A549 (cell line): ENCODE measurements at regions of chr2 and their contacts with region 1.

Region 1: DNA sequence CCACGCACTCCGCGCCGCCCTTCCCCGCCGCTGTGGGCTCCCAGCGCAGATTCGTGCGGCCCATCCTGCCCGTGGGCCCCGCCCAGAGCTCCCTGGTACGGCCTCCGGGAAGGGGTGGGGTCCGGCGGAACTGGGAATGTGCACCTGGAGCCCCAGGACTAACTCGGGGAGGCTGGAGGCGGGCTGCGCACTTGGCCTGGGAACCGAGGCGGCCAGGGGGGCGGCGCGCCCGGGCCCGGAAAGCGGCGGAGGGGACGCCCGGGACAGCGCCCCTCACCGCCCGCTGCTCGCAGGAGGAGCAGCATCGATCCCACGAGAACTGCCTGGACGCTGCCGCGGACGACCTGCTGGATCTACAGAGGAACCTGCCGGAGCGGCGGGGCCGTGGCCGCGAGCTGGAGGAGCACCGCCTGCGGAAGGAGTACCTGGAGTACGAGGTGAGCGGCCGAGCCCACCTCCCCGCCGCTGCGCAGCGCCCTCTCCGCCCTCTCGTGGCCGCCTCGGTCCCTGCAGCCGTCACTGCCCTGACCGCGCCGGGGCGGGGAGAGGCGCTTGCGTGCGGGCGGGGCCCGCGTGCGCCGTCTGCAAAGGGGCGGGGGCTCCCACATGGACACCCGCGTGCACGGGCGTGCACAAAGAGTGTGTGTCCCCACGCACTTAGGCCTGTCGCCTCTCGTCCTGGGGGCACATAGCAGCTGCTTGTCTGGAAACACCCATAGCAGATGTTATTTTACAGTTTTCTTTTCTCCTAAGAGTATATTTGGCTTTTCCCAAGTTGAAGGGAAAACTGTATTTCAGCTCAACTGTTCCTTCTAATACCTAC is 25.2 kb downstream of the PSD4 start:
- DNase-seq: peak; percentile 61 to 90
- ATAC-seq: peak; percentile 81 to 90
- H3K4me3 ChIP-seq: peak overlapping the region; percentile 73
- H3K27ac ChIP-seq: peak overlapping the region; percentile 92 to 97
- H3K4me1 ChIP-seq: peaks cover 48% of the 10 kb centered on the region
- CTCF ChIP-seq: peak; percentile 96
- EP300 ChIP-seq: no peak
- POLR2A ChIP-seq: peak; percentile 62
- RAD21 ChIP-seq: peak; percentile 56 to 80; a peak in 4 of 5 replicates

Region 2: GRCh38 chr2:113157118-113157896 is 41.7 kb before region 1 on chr2:
- CTCF ChIA-PET with region 1: interaction called, 32 read pairs
- POLR2A ChIA-PET with region 1: interaction called, 7 read pairs
- DNase-seq: no peak
- ATAC-seq: peak; percentile 69 to 81
- H3K4me3 ChIP-seq: peak overlapping the region; percentile 66
- H3K27ac ChIP-seq: peak overlapping the region; percentile 85 to 96
- H3K4me1 ChIP-seq: peaks cover 23% of the 10 kb centered on the region
- CTCF ChIP-seq: no peak
- EP300 ChIP-seq: no peak
- POLR2A ChIP-seq: no peak; the same call in 1 of the 2 replicates
- RAD21 ChIP-seq: no peak

Region 3: GRCh38 chr2:113181258-113182051 is 17.5 kb before region 1 on chr2:
- CTCF ChIA-PET with region 1: interaction called, 25 read pairs
- POLR2A ChIA-PET with region 1: no interaction called
- DNase-seq: no peak
- ATAC-seq: peak in 1 of 2 experiments; percentile 14; a peak in 2 of 6 replicates
- H3K4me3 ChIP-seq: no peak overlapping the region
- H3K27ac ChIP-seq: no peak overlapping the region
- H3K4me1 ChIP-seq: no peaks in the 10 kb centered on the region
- CTCF ChIP-seq: no peak
- EP300 ChIP-seq: no peak
- POLR2A ChIP-seq: no peak
- RAD21 ChIP-seq: no peak

Region 4: GRCh38 chr2:113225263-113226259 is 26.6 kb after region 1 on chr2:
- CTCF ChIA-PET with region 1: interaction called, 28 read pairs
- POLR2A ChIA-PET with region 1: interaction called, 3 read pairs
- DNase-seq: peak; percentile 41 to 84
- ATAC-seq: peak; percentile 82 to 86
- H3K4me3 ChIP-seq: no peak overlapping the region
- H3K27ac ChIP-seq: peak overlapping the region; percentile 77 to 91
- H3K4me1 ChIP-seq: peaks cover 69% of the 10 kb centered on the region
- CTCF ChIP-seq: no peak
- EP300 ChIP-seq: no peak
- POLR2A ChIP-seq: no peak
- RAD21 ChIP-seq: no peak

Region 5: DNA sequence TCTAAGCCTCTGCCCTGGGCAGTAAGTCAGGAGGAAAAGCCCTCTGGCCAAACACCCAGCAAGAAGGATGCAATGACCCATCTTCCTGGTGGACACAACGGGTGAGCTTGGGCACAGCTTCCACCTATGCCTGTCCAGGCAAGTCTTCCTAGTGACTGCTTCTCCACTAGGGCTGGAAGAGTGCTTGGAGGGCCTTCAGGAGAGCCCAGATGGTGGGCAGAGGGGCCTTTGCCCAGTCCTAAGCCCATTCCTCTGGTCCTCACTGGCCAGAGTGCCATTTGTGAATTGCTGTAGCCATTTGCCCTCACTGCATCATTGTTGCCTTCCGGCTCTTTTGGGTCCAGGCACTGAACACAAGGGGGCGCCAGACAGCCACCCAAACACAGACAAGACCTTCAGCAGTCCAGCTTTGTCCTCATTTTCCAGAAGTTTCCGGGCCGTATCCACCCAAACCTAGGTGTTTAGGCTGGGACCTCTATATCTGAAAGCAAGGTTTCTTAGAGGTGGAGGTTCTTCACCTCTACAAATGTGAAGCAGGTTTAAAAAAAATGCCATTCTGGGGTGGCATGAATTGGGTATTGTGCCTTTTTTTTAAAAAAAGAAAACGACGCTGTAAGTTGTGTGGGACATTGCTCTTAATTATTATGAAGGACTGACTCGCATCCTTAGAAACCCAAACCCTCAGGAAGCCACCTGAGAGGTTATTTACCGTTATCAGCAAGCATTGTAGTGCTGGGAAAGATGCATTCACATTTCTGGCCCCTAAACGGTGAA is 50.2 kb after region 1 on chr2:
- CTCF ChIA-PET with region 1: interaction called, 118 read pairs
- POLR2A ChIA-PET with region 1: no interaction called
- DNase-seq: peak; percentile 67 to 83
- ATAC-seq: peak; percentile 67 to 92; a peak in 4 of 6 replicates
- H3K4me3 ChIP-seq: no peak overlapping the region
- H3K27ac ChIP-seq: peak overlapping the region; percentile 97 to 98
- H3K4me1 ChIP-seq: peaks cover 24% of the 10 kb centered on the region
- CTCF ChIP-seq: peak; percentile 82
- EP300 ChIP-seq: no peak
- POLR2A ChIP-seq: no peak
- RAD21 ChIP-seq: peak; percentile 95 to 97

Region 6: DNA sequence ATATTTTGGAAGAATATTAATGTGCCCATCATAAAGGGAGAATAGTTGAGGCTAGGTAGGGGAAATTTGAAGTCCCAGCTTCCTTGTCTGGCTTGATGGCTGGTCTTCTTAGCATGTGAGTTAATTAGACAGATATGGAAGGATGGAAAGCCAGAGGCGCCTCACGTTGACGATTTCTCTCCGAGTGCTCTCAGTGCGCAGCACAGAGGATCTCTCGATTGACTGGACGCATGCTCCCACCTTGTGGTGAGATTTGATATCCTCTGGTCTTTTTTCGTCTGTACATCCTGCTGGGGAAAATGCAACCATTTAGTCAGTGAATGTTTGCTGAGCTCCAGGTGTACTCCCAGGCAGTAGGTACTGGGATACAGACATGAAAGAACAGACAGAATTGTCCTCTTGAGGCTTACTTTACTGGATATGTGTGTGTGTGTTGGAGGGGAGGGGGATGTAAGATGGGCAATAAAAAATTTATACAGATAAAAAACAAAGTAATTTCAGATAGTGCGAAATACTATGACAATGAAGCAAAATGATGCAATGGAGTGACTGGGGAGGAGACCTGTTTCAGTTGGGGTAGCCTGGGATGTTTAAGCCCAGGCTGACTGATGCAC is 171.6 kb after region 1 on chr2:
- CTCF ChIA-PET with region 1: interaction called, 113 read pairs
- POLR2A ChIA-PET with region 1: no interaction called
- DNase-seq: peak; percentile 67 to 89
- ATAC-seq: peak; percentile 96 to 99
- H3K4me3 ChIP-seq: no peak overlapping the region
- H3K27ac ChIP-seq: peak overlapping the region; percentile 70 to 84
- H3K4me1 ChIP-seq: peaks cover 36% of the 10 kb centered on the region
- CTCF ChIP-seq: peak; percentile 91
- EP300 ChIP-seq: no peak
- POLR2A ChIP-seq: no peak
- RAD21 ChIP-seq: peak; percentile 98 to 99